CD4-positive, alpha-beta T cell (primary cell): ENCODE measurements at regions of chr12 and their contacts with region 1.

Region 1: DNA sequence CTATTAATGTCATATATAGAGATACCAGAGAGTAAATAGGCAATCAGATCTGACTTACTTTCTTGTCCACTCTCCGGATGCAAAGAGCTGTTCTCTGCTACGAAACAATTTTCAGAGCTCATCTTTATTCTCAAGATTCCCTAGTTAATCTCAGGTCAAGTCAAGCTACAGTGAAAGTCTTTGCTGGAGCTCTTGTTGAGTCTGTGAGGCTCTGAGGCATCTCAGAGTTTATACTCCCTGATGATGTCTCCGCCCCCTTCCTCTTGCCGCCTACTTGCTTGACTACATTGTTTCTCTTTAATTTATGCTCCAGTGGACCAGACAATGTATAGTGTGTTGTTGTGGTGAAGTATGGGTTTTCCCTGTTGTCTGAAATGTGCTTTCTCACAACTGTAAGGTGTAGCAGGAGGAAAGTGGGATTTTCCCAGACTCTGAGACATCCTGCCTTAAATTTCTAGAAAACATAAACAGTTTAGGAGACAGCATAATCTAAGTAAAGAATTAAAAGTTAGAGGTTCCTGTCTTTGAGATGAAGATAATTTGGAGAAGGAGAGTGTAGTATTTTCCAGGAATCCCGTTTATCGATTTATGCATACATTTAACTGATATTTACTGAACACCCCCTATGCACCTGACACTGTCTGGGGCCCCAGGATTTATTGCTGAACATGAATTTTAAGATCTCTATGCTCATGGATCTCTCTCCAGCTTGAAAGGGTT is at the start of gene CD69:
- DNase-seq: peak; percentile 56 to 96 (median 69)
- ATAC-seq: peak; percentile 43
- H3K4me3 ChIP-seq: peak within 1 kb of the TSS; percentile 79
- H3K4me3 Mint-ChIP-seq: peak within 1 kb of the TSS; percentile 97
- H3K27ac ChIP-seq: peak within 1 kb of the TSS; percentile 98
- H3K27ac Mint-ChIP-seq: peak within 1 kb of the TSS; percentile 99
- H3K4me1 ChIP-seq: peaks cover 34% of the 10 kb centered on the region
- H3K4me1 Mint-ChIP-seq: peaks cover 68% of the 10 kb centered on the region
- H3K27me3 ChIP-seq: no peaks in the 10 kb centered on the region
- H3K27me3 Mint-ChIP-seq: no peaks in the 10 kb centered on the region
- CTCF ChIP-seq: no peak
- total RNA-seq, gene CD69: 631 to 659 TPM

Region 2: GRCh38 chr12:9707864-9708808 is 52.7 kb before region 1 on chr12:
- CTCF ChIA-PET with region 1: no interaction called
- POLR2A ChIA-PET with region 1: interaction called, 16 read pairs
- intact Hi-C with region 1: no loop called
- DNase-seq: peak; percentile 45 to 87 (median 60)
- ATAC-seq: peak; percentile 85
- H3K4me3 ChIP-seq: peak overlapping the region; percentile 30
- H3K4me3 Mint-ChIP-seq: peak overlapping the region; percentile 79
- H3K27ac ChIP-seq: peak overlapping the region; percentile 68 to 71
- H3K27ac Mint-ChIP-seq: peak overlapping the region; percentile 89
- H3K4me1 ChIP-seq: peaks cover 23% of the 10 kb centered on the region
- H3K4me1 Mint-ChIP-seq: peaks cover 79% of the 10 kb centered on the region
- H3K27me3 ChIP-seq: no peaks in the 10 kb centered on the region
- H3K27me3 Mint-ChIP-seq: no peaks in the 10 kb centered on the region
- CTCF ChIP-seq: peak; percentile 74

Region 3: GRCh38 chr12:9773216-9773877 is 12.5 kb after region 1 on chr12:
- CTCF ChIA-PET with region 1: interaction called, 4 read pairs
- POLR2A ChIA-PET with region 1: interaction called, 31 read pairs
- intact Hi-C with region 1: loop called (anchors 1 to 2 kb)
- DNase-seq: peak in 3 of 14 experiments; percentile 49 to 68 (median 53)
- ATAC-seq: peak; percentile 65
- H3K4me3 ChIP-seq: peak overlapping the region; percentile 2
- H3K4me3 Mint-ChIP-seq: peak overlapping the region; percentile 67
- H3K27ac ChIP-seq: peak overlapping the region in 1 of 2 donors; percentile 46
- H3K27ac Mint-ChIP-seq: peak overlapping the region; percentile 54
- H3K4me1 ChIP-seq: peaks cover 23% of the 10 kb centered on the region
- H3K4me1 Mint-ChIP-seq: peaks cover 89% of the 10 kb centered on the region
- H3K27me3 ChIP-seq: no peaks in the 10 kb centered on the region
- H3K27me3 Mint-ChIP-seq: no peaks in the 10 kb centered on the region
- CTCF ChIP-seq: no peak

Region 4: GRCh38 chr12:9797722-9798619 is 37.1 kb after region 1 on chr12:
- CTCF ChIA-PET with region 1: interaction called, 185 read pairs
- POLR2A ChIA-PET with region 1: interaction called, 253 read pairs
- intact Hi-C with region 1: loop called in 1 of 2 experiments (anchors 2 kb)
- DNase-seq: peak; percentile 40 to 91 (median 56)
- ATAC-seq: peak; percentile 95
- H3K4me3 ChIP-seq: no peak overlapping the region
- H3K4me3 Mint-ChIP-seq: peak overlapping the region; percentile 52
- H3K27ac ChIP-seq: peak overlapping the region in 1 of 2 donors; percentile 42
- H3K27ac Mint-ChIP-seq: peak overlapping the region; percentile 5
- H3K4me1 ChIP-seq: peaks cover 19% of the 10 kb centered on the region
- H3K4me1 Mint-ChIP-seq: peaks cover 51% of the 10 kb centered on the region
- H3K27me3 ChIP-seq: no peaks in the 10 kb centered on the region
- H3K27me3 Mint-ChIP-seq: no peaks in the 10 kb centered on the region
- CTCF ChIP-seq: peak; percentile 91

Region 5: DNA sequence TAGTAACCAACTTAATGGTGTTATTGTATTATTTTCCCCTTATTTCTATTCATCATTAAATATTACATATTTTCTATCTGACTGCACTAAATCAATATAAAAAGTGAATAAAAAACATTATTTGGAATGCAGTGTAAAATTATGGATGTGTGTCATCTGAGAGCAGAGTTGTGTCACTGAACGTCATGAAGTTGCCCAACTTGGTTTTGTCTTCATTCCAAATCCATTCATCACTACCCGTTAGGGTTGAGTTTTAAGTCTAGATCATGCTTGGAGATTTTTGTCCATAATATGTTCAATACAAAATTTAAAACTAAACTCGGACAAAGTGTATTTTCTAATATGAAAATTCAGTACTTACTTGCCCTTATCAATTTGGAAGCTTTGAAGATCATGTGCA is 82.6 kb after region 1 on chr12:
- CTCF ChIA-PET with region 1: no interaction called
- POLR2A ChIA-PET with region 1: no interaction called
- intact Hi-C with region 1: no loop called
- DNase-seq: no peak
- ATAC-seq: no peak
- H3K4me3 ChIP-seq: no peak overlapping the region
- H3K4me3 Mint-ChIP-seq: no peak overlapping the region
- H3K27ac ChIP-seq: no peak overlapping the region
- H3K27ac Mint-ChIP-seq: no peak overlapping the region
- H3K4me1 ChIP-seq: no peaks in the 10 kb centered on the region
- H3K4me1 Mint-ChIP-seq: no peaks in the 10 kb centered on the region
- H3K27me3 ChIP-seq: no peaks in the 10 kb centered on the region
- H3K27me3 Mint-ChIP-seq: no peaks in the 10 kb centered on the region
- CTCF ChIP-seq: no peak